ENCODE measurements at regions of chr17 and their contacts with region 1.

Region 1: DNA sequence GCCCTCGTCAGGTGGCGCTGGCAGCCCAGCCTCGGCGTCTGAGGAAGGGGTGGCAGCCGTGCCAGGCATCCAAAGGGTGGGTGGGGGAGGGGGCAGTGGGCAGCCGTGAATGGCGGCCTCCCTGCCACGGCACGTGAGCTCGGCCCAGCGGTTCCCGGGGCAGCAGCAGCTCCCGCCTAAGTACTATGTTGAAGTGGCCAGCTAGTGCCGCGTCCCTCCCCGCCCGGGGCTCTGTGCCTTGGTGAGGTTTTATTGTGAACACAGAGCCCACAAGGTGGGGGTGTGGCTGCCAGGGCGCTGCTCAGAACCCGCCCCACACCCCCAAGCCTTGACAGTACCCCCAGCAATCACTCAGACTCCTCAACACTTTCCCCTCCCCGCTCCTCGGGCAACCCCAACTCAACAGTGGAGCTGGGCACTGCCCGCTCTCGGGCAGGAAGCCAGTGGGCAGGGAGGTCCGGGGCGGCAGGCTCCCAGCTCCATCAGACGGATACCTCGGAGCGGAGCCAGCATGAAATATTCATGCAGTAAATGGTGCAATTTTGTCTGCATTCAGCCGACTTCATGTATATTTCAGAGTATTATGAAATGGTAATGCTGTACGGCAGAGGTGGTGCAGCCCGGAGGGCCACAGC is 80.4 kb downstream of the ENGASE start:
- DNase-seq: no peak
- ATAC-seq: no peak
- H3K4me3 ChIP-seq: no peak overlapping the region
- H3K27ac ChIP-seq: no peak overlapping the region
- H3K4me1 ChIP-seq: no peaks in the 10 kb centered on the region
- H3K27me3 ChIP-seq: no peaks in the 10 kb centered on the region
- CTCF ChIP-seq: no peak
- POLR2A ChIP-seq: no peak

Region 2: DNA sequence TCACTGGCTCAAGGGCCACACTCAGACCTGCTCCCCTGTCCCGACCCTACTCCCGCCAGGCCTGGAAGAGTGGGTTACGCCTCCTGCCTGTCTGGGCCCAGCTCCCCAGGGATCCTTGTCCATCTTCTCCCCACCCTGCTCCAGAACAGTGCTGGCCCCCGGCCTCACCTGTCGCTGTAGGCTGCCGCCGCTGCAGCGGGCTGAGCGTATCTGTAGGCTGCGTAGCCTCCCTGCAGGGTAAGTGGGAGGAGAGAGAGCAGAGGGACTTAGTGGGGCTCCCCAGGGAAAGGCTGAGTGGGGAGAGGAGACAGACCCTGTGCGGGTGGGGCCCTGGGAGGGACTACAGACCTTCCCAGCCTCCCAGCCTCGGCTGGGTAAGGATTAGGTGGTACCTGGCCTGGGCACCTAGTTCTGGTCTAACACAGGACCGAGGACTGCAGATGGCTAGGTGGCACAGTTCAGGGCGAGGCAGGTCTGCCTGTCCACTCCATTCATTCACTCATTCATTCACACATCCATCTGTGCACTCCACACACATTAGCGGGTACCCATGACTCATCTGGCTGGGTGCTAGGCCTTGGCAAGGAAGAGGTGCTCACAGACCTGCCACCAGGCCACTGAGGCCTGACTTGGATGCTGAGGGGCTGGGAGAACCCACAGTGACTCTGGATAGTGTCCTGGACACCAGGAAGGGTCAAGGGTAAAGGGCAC is 59.6 kb before region 1 on chr17:
- intact Hi-C with region 1: no loop called
- DNase-seq: no peak
- ATAC-seq: no peak
- H3K4me3 ChIP-seq: no peak overlapping the region
- H3K27ac ChIP-seq: no peak overlapping the region
- H3K4me1 ChIP-seq: no peaks in the 10 kb centered on the region
- H3K27me3 ChIP-seq: no peaks in the 10 kb centered on the region
- CTCF ChIP-seq: no peak
- POLR2A ChIP-seq: no peak

Region 3: GRCh38 chr17:79214940-79215604 is 60.0 kb after region 1 on chr17:
- intact Hi-C with region 1: loop called in 1 of 2 experiments (anchors 10 kb)
- DNase-seq: no peak
- ATAC-seq: no peak
- H3K4me3 ChIP-seq: no peak overlapping the region
- H3K27ac ChIP-seq: no peak overlapping the region
- H3K4me1 ChIP-seq: no peaks in the 10 kb centered on the region
- H3K27me3 ChIP-seq: no peaks in the 10 kb centered on the region
- CTCF ChIP-seq: no peak
- POLR2A ChIP-seq: no peak

Measured in right lobe of liver (tissue), 6 donors.